MCF 10A (cell line): ENCODE measurements at regions of chr7 and their contacts with region 1.

Region 1: GRCh38 chr7:19442016-19442785 is 266.6 kb downstream of the POLR1F start:
- DNase-seq: peak; percentile 67
- H3K4me3 Mint-ChIP-seq: no peak overlapping the region
- H3K27ac Mint-ChIP-seq: no peak overlapping the region
- H3K4me1 Mint-ChIP-seq: peaks cover 6% of the 10 kb centered on the region
- H3K27me3 Mint-ChIP-seq: no peaks in the 10 kb centered on the region
- CTCF ChIP-seq: peak; percentile 46

Region 2: GRCh38 chr7:19621740-19622139 is 179.5 kb after region 1 on chr7:
- CTCF ChIA-PET with region 1: interaction called, 3 read pairs
- POLR2A ChIA-PET with region 1: no interaction called
- intact Hi-C with region 1: loop called (anchors 1 kb)
- DNase-seq: peak; percentile 67
- H3K4me3 Mint-ChIP-seq: no peak overlapping the region
- H3K27ac Mint-ChIP-seq: peak overlapping the region; percentile 89
- H3K4me1 Mint-ChIP-seq: peaks cover 33% of the 10 kb centered on the region
- H3K27me3 Mint-ChIP-seq: no peaks in the 10 kb centered on the region
- CTCF ChIP-seq: peak; percentile 34

Region 3: GRCh38 chr7:19665399-19666008 is 223.3 kb after region 1 on chr7:
- CTCF ChIA-PET with region 1: interaction called, 3 read pairs
- POLR2A ChIA-PET with region 1: no interaction called
- intact Hi-C with region 1: loop called (anchors 5 kb)
- DNase-seq: peak; percentile 51
- H3K4me3 Mint-ChIP-seq: no peak overlapping the region
- H3K27ac Mint-ChIP-seq: no peak overlapping the region
- H3K4me1 Mint-ChIP-seq: peaks cover 23% of the 10 kb centered on the region
- H3K27me3 Mint-ChIP-seq: no peaks in the 10 kb centered on the region
- CTCF ChIP-seq: peak; percentile 48